Breast epithelium (tissue), 4 donors: ENCODE measurements at regions of chrX and their contacts with region 1.

Region 1: GRCh38 chrX:17846045-17846444 is 15.1 kb downstream of the RAI2 start:
- DNase-seq: no peak
- H3K4me3 ChIP-seq: no peak overlapping the region
- H3K27ac ChIP-seq: peak overlapping the region; percentile 43 to 50
- H3K4me1 ChIP-seq: no peaks in the 10 kb centered on the region
- H3K27me3 ChIP-seq: peaks cover 0 to 26% of the 10 kb centered on the region in 2 donors
- CTCF ChIP-seq: no peak
- POLR2A ChIP-seq: no peak

Region 2: DNA sequence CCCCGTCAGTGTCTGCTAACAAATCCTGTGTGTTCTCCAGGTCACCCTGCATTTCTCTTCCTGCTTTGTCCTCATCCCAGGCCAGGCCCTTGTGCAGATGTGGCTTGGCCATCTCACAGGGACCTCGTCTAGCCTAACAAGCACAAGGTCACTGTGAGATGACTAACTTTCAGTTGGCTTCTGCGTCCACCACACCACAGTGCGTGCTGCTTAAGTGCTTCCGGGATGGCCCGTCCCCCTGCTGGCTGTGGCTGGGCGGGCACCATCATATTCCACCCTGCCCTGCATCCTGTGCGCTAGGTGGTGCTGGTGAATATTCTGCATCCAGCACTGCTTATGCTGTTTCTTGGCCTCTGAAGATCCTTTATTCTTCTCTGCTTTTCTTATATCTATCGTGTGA is 1009.7 kb before region 1 on chrX:
- intact Hi-C with region 1: loop called (anchors 5 kb)
- DNase-seq: no peak
- H3K4me3 ChIP-seq: no peak overlapping the region
- H3K27ac ChIP-seq: no peak overlapping the region
- H3K4me1 ChIP-seq: no peaks in the 10 kb centered on the region
- H3K27me3 ChIP-seq: no peaks in the 10 kb centered on the region
- CTCF ChIP-seq: no peak
- POLR2A ChIP-seq: no peak

Region 3: GRCh38 chrX:18620338-18620737 is 774.3 kb after region 1 on chrX:
- intact Hi-C with region 1: no loop called
- DNase-seq: no peak
- H3K4me3 ChIP-seq: no peak overlapping the region
- H3K27ac ChIP-seq: no peak overlapping the region
- H3K4me1 ChIP-seq: no peaks in the 10 kb centered on the region
- H3K27me3 ChIP-seq: peaks cover 0 to 13% of the 10 kb centered on the region in 2 donors
- CTCF ChIP-seq: no peak
- POLR2A ChIP-seq: no peak